Right lobe of liver (tissue), 6 donors: ENCODE measurements at regions of chr1 and their contacts with region 1.

Region 1: DNA sequence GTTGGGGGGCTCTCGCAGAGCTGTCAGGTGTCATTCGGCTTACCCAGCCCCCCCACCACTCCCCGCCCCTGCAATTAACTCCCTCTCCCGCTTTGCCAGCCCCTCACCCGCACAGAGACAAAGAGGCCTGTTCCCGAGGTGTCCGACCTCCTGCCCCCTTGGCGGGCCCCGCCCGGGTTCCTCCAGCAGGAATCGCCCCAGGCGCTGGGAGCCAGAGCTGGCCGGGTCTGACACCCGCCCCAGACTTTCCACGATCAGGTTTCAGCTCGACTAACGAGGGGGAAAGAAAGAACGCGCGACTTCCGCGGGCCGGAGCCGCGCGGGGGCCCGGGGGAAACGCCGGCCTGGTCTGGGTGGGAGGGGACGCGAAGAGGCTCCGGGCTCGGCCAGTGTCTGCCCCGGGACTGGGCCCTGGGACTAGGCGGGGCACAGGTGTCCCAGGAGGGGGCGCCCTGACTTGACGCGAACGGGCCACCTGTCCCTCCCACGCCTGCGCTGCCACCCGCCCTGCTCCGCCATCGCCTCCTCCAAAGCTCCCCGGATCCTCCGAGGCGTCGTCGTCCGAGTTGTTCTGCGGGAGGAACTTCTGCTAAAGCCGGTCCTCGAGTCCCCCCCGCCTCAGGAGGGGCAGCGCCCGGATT is 36.4 kb upstream of the HHAT start:
- DNase-seq: peak in 2 of 3 donors; percentile 61 to 63
- ATAC-seq: peak; percentile 78 to 94 (median 82)
- H3K4me3 ChIP-seq: peak overlapping the region in 2 of 3 donors; percentile 31 to 40
- H3K27ac ChIP-seq: no peak overlapping the region
- H3K4me1 ChIP-seq: peaks cover 0 to 11% (median 0%) of the 10 kb centered on the region in 4 donors
- H3K27me3 ChIP-seq: peaks cover 0 to 5% of the 10 kb centered on the region in 2 donors
- CTCF ChIP-seq: peak in 3 of 4 donors; percentile 26 to 42 (median 34)
- POLR2A ChIP-seq: no peak

Region 2: DNA sequence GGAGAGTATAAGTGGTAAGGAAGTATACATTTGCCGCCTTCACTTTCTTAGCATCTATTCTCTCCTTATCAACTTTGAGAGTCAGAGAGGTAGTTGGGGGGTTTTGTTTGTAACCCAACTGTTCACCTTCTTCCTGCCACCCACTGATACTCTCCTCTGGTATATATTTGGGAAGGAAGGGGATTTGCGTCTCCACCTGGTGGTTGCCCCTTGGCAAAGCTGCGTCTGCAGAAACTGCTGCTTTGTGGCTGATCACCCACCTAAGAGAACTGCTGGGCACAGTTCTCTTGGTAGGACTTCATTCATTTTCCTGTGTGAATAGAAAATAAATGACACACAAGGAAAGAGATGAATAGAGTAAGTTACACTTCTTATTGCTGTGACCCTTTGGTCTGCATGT is 267.4 kb before region 1 on chr1:
- intact Hi-C with region 1: no loop called
- DNase-seq: no peak
- ATAC-seq: no peak
- H3K4me3 ChIP-seq: no peak overlapping the region
- H3K27ac ChIP-seq: no peak overlapping the region
- H3K4me1 ChIP-seq: no peaks in the 10 kb centered on the region
- H3K27me3 ChIP-seq: no peaks in the 10 kb centered on the region
- CTCF ChIP-seq: no peak
- POLR2A ChIP-seq: no peak

Region 3: GRCh38 chr1:210132582-210132981 is 159.8 kb before region 1 on chr1:
- intact Hi-C with region 1: loop called in 1 of 2 experiments (anchors 10 kb)
- DNase-seq: no peak
- ATAC-seq: peak in 1 of 4 donors; percentile 23
- H3K4me3 ChIP-seq: no peak overlapping the region
- H3K27ac ChIP-seq: no peak overlapping the region
- H3K4me1 ChIP-seq: no peaks in the 10 kb centered on the region
- H3K27me3 ChIP-seq: no peaks in the 10 kb centered on the region
- CTCF ChIP-seq: no peak
- POLR2A ChIP-seq: no peak

Region 4: GRCh38 chr1:210250998-210251679 is 41.2 kb before region 1 on chr1:
- intact Hi-C with region 1: no loop called
- DNase-seq: no peak
- ATAC-seq: peak in 2 of 4 donors; percentile 9 to 15
- H3K4me3 ChIP-seq: peak overlapping the region; percentile 4 to 34 (median 26)
- H3K27ac ChIP-seq: no peak overlapping the region
- H3K4me1 ChIP-seq: peaks cover 0 to 16% (median 3%) of the 10 kb centered on the region in 4 donors
- H3K27me3 ChIP-seq: peaks cover 0 to 21% of the 10 kb centered on the region in 2 donors
- CTCF ChIP-seq: no peak
- POLR2A ChIP-seq: no peak